Activated T-helper 1 cell treated with anti-CD3 and anti-CD28 coated beads, Interleukin-12 subunit alpha, Interleukin-12 subunit beta, Interleukin-2, Interleukin-4 antibody, amounts not matched to agents 30 ng/mL and 10 ng/mL and 1 ng/mL, durations not matched to agents 14 hours and 24 hours and 36 hours (primary cell): ENCODE measurements at regions of chr15 and their contacts with region 1.

Region 1: DNA sequence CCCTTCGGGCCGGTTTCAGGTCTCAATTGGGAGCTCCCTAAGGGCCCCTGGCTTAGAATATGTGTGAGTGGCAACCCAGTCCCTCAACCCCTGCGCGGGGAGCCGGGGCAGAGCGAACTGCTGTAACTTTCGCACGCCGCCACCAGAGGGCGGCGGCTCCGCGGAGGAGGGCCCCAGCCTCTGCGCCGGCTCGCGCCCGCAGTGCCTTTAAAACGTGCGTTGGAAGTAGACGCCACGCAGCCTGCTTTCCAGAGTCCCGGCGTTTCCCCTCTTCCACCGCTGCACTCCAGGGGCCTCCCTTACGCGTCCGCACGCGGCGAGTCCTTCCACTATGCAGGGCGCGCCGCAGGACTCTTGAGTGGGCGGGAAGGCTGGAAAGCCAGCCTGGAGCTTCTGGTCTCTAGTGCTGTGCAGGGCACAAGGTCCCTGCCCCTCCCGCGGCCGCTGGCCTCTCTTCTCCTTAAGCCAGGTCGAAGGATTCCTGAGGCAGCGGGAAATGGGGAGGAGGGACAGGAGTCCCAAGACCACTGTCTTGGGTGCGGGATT is 23.7 kb upstream of the RNU6-1 start:
- DNase-seq: peak; percentile 56
- H3K4me3 Mint-ChIP-seq: peak overlapping the region; percentile 65
- H3K27ac Mint-ChIP-seq: no peak overlapping the region
- H3K4me1 Mint-ChIP-seq: peaks cover 6% of the 10 kb centered on the region
- H3K27me3 Mint-ChIP-seq: peaks cover 26% of the 10 kb centered on the region

Region 2: GRCh38 chr15:67413770-67414394 is 449.6 kb before region 1 on chr15:
- intact Hi-C with region 1: no loop called
- DNase-seq: no peak
- H3K4me3 Mint-ChIP-seq: no peak overlapping the region
- H3K27ac Mint-ChIP-seq: no peak overlapping the region
- H3K4me1 Mint-ChIP-seq: no peaks in the 10 kb centered on the region
- H3K27me3 Mint-ChIP-seq: no peaks in the 10 kb centered on the region

Region 3: DNA sequence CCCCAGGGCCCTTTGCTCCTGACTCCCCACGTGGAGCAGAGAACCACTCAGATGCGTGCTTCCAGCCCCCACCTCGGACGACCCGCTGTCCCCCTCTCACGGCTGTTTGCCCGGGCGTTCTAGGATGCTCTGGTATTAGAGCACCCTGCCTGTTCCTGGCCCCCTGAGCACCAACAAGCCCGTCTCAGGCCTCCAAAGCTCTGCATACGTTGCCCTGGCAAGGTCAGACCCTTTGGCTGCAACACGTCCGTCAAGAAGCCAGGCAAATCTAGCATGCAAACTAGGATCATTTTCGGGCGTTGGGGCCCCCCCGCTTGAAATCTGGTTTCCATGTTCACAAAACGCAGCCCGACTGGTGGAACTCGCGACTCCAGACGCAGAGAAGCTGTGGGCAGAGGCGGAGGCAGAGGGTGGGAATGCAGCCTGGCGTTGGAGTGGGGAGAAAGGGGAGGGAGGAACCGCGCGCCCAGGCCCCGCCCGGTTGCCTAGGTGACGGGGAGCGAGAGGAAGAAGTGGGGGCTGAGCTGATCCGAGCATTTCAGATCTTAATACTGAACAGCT is 104.4 kb after region 1 on chr15:
- intact Hi-C with region 1: loop called (anchors 10 kb)
- DNase-seq: no peak
- H3K4me3 Mint-ChIP-seq: no peak overlapping the region
- H3K27ac Mint-ChIP-seq: no peak overlapping the region
- H3K4me1 Mint-ChIP-seq: no peaks in the 10 kb centered on the region
- H3K27me3 Mint-ChIP-seq: peaks cover 25% of the 10 kb centered on the region

Region 4: GRCh38 chr15:68154923-68155559 is 291.5 kb after region 1 on chr15:
- intact Hi-C with region 1: loop called (anchors 1 kb)
- DNase-seq: no peak
- H3K4me3 Mint-ChIP-seq: no peak overlapping the region
- H3K27ac Mint-ChIP-seq: no peak overlapping the region
- H3K4me1 Mint-ChIP-seq: peaks cover 7% of the 10 kb centered on the region
- H3K27me3 Mint-ChIP-seq: no peaks in the 10 kb centered on the region

Region 5: GRCh38 chr15:68210821-68211655 is 347.5 kb after region 1 on chr15:
- intact Hi-C with region 1: loop called (anchors 2 kb)
- DNase-seq: peak; percentile 36
- H3K4me3 Mint-ChIP-seq: no peak overlapping the region
- H3K27ac Mint-ChIP-seq: no peak overlapping the region
- H3K4me1 Mint-ChIP-seq: peaks cover 35% of the 10 kb centered on the region
- H3K27me3 Mint-ChIP-seq: no peaks in the 10 kb centered on the region